Activated CD4-positive, alpha-beta memory T cell treated with anti-CD3 and anti-CD28 coated beads, Interleukin-2, amount 10 ng/mL, durations not matched to agents 7 days and 5 days (primary cell): ENCODE measurements at regions of chr20 and their contacts with region 1.

Region 1: DNA sequence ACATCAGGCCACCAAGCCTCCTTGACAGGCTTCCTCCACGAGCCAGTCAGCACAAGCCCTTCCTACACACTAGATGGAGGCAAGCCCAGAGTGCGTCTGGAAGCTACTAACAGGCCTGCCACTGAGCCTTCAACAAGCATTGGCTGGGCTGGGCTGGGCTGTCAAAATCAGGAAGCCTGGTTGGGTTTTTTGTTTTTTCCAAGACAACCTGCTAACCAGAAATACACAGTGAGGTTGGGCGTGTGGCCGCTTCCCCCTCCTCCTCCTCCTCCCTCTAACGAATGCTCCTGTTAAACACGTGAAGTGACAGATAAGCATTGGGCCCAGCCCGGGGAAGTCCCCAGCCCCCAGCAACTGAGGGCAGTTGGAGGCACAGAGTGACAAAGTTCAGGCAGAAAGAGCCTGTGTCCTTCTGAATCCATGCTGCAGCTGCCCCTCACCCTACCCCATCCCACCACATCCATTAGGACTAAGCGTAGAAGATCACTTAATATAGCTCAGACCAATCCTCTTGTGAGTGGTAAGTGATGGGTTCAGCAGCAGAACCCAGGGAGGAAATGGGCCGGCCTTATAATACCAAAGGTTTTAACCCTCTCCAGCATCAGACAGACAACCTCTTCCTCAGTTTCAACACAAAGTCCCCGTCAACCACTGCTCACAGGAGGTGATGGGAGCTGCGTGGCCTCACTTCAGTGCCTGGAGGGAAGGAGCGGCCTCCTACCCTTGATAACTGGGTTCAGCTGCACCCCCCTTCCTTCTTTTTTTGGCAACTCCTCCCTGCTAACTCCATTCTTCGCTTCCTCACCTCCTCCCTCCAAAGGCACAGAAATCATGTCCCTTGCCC is 1.1 kb downstream of the NFATC2 start:
- DNase-seq: peak; percentile 90
- H3K4me3 Mint-ChIP-seq: peak overlapping the region; percentile 99
- H3K27ac Mint-ChIP-seq: peak overlapping the region; percentile 99
- H3K4me1 Mint-ChIP-seq: peaks cover 53% of the 10 kb centered on the region
- H3K27me3 Mint-ChIP-seq: peaks cover 27% of the 10 kb centered on the region

Region 2: GRCh38 chr20:51385646-51386530 is 155.5 kb before region 1 on chr20:
- CTCF ChIA-PET with region 1: interaction called, 27 read pairs
- POLR2A ChIA-PET with region 1: interaction called, 16 read pairs
- DNase-seq: peak; percentile 49
- H3K4me3 Mint-ChIP-seq: no peak overlapping the region
- H3K27ac Mint-ChIP-seq: peak overlapping the region; percentile 61
- H3K4me1 Mint-ChIP-seq: peaks cover 73% of the 10 kb centered on the region
- H3K27me3 Mint-ChIP-seq: no peaks in the 10 kb centered on the region

Region 3: DNA sequence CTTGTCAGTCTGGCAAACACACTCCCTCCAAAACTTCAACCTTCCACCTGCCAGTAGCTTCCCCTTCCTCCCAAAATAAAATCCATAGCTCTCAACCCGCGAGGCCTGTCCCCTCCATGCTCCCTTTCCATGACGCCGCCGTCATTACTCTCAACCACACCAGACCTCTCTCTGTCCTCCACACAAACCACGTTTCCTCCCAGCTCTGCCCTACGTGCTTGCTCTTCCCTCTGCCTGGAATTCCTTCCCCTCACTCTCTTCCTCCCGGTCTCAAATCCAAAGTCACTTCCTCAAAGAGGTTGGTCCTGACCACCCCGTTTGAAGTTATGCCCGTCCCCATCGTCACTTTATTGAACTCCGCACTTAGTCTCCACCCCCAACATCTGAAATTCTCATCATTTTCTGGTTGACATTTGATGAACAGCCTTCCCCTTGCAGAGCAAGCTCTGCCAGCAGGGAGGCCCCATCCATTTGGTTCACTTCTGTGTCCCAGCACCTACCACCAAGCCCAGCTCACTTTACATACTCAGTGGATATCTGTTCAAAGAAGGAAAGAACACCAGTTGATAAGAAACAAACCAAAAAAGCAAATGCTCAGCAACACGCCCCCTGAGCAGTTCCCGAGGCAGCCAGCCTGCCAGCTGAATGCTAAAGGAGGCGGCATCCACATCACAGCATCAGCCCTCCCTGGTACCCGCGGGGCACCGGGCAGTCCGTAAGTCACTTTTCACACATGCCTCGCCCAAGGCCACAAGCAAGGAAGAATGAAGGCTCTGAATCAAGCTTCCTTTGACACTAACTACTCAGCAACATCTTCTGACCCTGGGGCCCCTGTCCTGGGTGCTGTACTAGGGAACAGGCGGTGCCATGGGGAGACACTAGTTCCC is 123.9 kb before region 1 on chr20:
- CTCF ChIA-PET with region 1: interaction called, 9 read pairs
- POLR2A ChIA-PET with region 1: interaction called, 10 read pairs
- DNase-seq: peak; percentile 55
- H3K4me3 Mint-ChIP-seq: peak overlapping the region; percentile 1
- H3K27ac Mint-ChIP-seq: peak overlapping the region; percentile 85
- H3K4me1 Mint-ChIP-seq: peaks cover 97% of the 10 kb centered on the region
- H3K27me3 Mint-ChIP-seq: no peaks in the 10 kb centered on the region

Region 4: GRCh38 chr20:51500311-51500710 is 41.1 kb before region 1 on chr20:
- CTCF ChIA-PET with region 1: interaction called, 7 read pairs
- POLR2A ChIA-PET with region 1: interaction called, 16 read pairs
- DNase-seq: peak; percentile 66
- H3K4me3 Mint-ChIP-seq: no peak overlapping the region
- H3K27ac Mint-ChIP-seq: peak overlapping the region; percentile 75
- H3K4me1 Mint-ChIP-seq: peaks cover 84% of the 10 kb centered on the region
- H3K27me3 Mint-ChIP-seq: no peaks in the 10 kb centered on the region

Region 5: DNA sequence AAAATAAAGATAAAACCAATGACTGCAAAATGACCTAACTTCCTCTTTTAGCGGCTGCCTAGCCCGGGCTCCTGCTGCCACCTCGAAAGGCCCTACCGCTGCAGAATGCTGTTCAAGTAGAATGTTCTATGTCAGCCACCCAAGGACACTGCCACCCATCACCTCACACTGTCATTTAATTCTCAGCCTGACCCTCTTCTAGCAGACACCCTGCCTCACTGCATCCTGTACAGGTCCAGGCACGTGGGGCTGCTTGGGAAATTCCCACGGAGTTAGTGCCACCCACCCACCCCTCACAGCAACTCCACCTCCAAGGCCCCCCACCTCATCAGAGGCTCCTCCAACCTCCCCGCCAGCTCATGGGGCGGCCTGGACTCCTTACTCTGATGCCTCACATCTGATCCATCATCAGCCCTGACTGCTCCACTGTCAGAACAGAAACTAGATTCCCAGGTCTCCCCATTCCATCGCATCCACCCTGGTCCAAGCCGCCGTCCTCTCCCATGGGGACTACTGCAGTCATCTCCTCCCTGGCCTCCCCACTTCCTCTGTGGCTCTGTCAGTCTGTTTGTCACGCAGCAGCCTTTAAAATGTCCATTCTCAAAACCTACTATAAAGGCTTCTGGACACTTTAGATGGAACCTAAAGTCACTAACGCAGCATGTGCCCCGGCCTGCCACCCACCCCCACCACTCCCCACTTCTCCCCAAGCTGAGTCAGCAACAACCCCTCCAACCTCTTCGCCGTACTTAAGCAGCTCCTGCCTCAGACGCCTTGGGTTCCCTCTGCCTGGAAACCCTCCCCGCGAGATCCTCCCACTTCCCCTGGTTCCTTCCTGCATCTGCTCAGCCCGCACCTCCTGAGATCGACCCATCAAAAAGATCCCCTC is 15.9 kb before region 1 on chr20:
- CTCF ChIA-PET with region 1: interaction called, 19 read pairs
- POLR2A ChIA-PET with region 1: interaction called, 56 read pairs
- DNase-seq: peak; percentile 55
- H3K4me3 Mint-ChIP-seq: peak overlapping the region; percentile 69
- H3K27ac Mint-ChIP-seq: peak overlapping the region; percentile 90
- H3K4me1 Mint-ChIP-seq: peaks cover 76% of the 10 kb centered on the region
- H3K27me3 Mint-ChIP-seq: no peaks in the 10 kb centered on the region

Region 6: GRCh38 chr20:51595058-51595532 is 53.7 kb after region 1 on chr20:
- CTCF ChIA-PET with region 1: interaction called, 22 read pairs
- POLR2A ChIA-PET with region 1: interaction called, 4 read pairs
- DNase-seq: peak; percentile 85
- H3K4me3 Mint-ChIP-seq: no peak overlapping the region
- H3K27ac Mint-ChIP-seq: peak overlapping the region; percentile 65
- H3K4me1 Mint-ChIP-seq: peaks cover 30% of the 10 kb centered on the region
- H3K27me3 Mint-ChIP-seq: peaks cover 11% of the 10 kb centered on the region